Adrenal gland (tissue), 19 donors: ENCODE measurements at regions of chr15 and their contacts with region 1.

Region 1: GRCh38 chr15:51380999-51381795 is 39.7 kb downstream of the GLDN start:
- DNase-seq: peak; percentile 46 to 83 (median 68)
- H3K4me3 ChIP-seq: no peak overlapping the region
- H3K27ac ChIP-seq: no peak overlapping the region
- H3K4me1 ChIP-seq: peaks cover 0 to 15% of the 10 kb centered on the region in 2 donors
- H3K27me3 ChIP-seq: no peaks in the 10 kb centered on the region
- CTCF ChIP-seq: peak; percentile 77 to 99 (median 91)
- POLR2A ChIP-seq: no peak

Region 2: GRCh38 chr15:51155891-51156290 is 225.3 kb before region 1 on chr15:
- intact Hi-C with region 1: loop called (anchors 5 to 10 kb)
- DNase-seq: peak in 1 of 7 donors; percentile 26
- H3K4me3 ChIP-seq: no peak overlapping the region
- H3K27ac ChIP-seq: no peak overlapping the region
- H3K4me1 ChIP-seq: no peaks in the 10 kb centered on the region
- H3K27me3 ChIP-seq: no peaks in the 10 kb centered on the region
- CTCF ChIP-seq: no peak
- POLR2A ChIP-seq: no peak

Region 3: DNA sequence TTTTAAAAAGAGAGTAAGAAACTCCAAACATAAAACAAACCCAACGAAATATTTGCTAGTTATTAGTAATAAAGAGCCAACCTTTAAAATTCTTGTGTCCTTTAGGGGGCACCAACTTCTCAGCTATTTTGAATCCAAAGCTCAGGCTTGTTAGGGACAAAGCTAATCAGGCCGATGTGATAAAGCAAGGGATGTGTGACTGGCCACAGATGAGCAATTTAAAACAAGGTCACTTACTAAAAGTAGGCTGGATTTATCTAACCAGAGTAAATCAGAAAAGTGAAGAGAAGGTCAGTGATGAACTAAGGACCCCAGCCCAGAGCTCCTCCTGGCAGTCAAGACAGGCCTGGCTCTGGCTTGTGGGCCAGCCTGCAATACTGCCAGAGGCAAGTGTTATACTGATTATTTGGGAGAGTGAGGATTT is 151.3 kb before region 1 on chr15:
- intact Hi-C with region 1: loop called (anchors 10 kb)
- DNase-seq: peak in 3 of 7 donors; percentile 20 to 32 (median 28)
- H3K4me3 ChIP-seq: no peak overlapping the region
- H3K27ac ChIP-seq: no peak overlapping the region
- H3K4me1 ChIP-seq: peaks cover 4 to 16% of the 10 kb centered on the region in 2 donors
- H3K27me3 ChIP-seq: no peaks in the 10 kb centered on the region
- CTCF ChIP-seq: peak in 5 of 6 experiments; percentile 41 to 52 (median 49)
- POLR2A ChIP-seq: no peak

Region 4: DNA sequence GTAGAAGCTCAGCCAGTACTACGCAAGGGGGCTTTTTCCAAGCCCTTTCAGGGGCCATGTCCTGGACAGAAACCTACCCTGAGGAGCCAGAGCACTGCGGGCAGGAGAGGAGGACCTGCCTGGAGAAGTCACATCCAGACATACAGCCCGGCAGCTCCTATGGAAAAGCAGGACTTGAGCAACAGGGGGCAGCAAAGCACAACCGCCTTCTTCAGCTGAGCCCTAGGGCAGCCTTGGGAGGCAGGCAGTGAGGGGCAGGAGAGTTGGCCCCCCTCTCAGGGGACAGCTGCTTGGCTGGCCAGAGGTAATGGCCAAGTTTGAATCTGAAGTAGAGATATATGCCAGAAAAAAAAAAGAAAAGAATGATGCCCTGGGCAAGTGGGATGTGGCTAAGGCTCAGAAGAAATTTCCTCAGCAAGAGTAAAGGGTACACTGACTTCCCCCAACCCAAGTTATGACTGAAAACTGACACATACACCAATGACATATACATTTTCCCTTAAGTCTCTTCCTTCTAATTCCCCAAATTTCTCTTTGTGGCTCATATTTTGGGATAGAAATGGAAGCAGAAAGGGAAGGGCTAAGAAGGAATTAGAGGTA is 99.7 kb before region 1 on chr15:
- intact Hi-C with region 1: loop called (anchors 5 to 10 kb)
- DNase-seq: peak; percentile 32 to 81 (median 69)
- H3K4me3 ChIP-seq: no peak overlapping the region
- H3K27ac ChIP-seq: no peak overlapping the region
- H3K4me1 ChIP-seq: peaks cover 0 to 8% of the 10 kb centered on the region in 2 donors
- H3K27me3 ChIP-seq: no peaks in the 10 kb centered on the region
- CTCF ChIP-seq: peak; percentile 40 to 66 (median 60)
- POLR2A ChIP-seq: no peak